ENCODE measurements at regions of chr16 and their contacts with region 1.

Region 1: GRCh38 chr16:57084257-57084770 is 8.1 kb upstream of the CPNE2 start:
- DNase-seq: peak; percentile 81 to 93
- ATAC-seq: peak; percentile 67 to 87
- H3K4me3 ChIP-seq: no peak overlapping the region
- H3K27ac ChIP-seq: peak overlapping the region in 1 of 2 experiments; percentile 56; a peak in 3 of 6 replicates
- H3K4me1 ChIP-seq: no peaks in the 10 kb centered on the region
- CTCF ChIP-seq: peak; percentile 90
- EP300 ChIP-seq: no peak
- POLR2A ChIP-seq: no peak
- RAD21 ChIP-seq: peak; percentile 86 to 90

Region 2: DNA sequence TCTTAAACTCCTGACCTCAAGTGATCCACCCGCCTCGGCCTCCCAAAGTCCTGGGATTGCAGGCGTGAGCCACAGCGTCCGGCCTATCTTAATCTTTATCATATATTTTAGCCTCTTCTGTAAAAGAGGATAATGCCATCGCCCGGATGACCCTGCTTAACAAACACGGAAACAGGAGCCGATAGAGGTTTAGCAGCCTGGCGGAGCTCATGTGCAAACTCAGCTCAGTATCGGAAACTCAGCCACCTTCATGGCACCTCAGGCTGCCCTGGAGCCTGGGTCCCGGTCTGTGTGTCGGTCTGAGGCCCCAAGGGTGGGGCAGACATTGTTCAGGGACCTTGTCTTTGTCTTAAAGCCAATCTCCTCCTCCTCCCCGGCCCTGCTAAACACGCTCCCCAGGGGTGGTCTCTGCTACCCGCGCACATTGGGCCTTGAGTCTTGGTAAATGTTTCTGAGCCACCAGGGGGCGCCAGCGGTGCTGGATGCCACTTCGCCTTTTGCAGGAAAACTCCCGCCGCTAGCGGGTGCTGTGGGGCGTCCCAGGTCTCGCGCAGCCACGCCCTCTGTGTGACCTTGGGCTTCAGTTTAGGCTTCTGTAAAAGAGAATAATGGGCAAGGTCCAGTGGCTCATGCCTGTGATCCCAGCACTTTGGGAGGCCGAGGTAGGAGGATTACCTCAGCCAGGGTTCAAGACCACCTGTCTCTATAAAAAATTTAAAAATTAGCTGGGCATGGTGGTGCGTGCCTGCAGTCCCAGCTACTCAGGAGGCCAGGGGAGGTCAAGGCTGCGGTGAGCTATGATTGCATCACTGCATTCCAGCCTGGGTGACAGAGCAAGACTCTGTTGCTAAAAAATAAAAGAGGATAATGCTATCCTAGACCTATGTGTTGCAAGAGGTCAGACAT is 119.8 kb before region 1 on chr16:
- CTCF ChIA-PET with region 1: interaction called, 11 read pairs
- POLR2A ChIA-PET with region 1: no interaction called
- DNase-seq: peak; percentile 73 to 85
- ATAC-seq: peak; percentile 57 to 87; a peak in 4 of 6 replicates
- H3K4me3 ChIP-seq: no peak overlapping the region
- H3K27ac ChIP-seq: peak overlapping the region in 1 of 2 experiments; percentile 22; a peak in 1 of 6 replicates
- H3K4me1 ChIP-seq: peaks cover 3% of the 10 kb centered on the region; the same call in 1 of the 3 replicates
- CTCF ChIP-seq: peak; percentile 89
- EP300 ChIP-seq: no peak
- POLR2A ChIP-seq: no peak
- RAD21 ChIP-seq: peak; percentile 70 to 82

Region 3: GRCh38 chr16:57066625-57067024 is 17.7 kb before region 1 on chr16:
- CTCF ChIA-PET with region 1: interaction called, 31 read pairs
- POLR2A ChIA-PET with region 1: no interaction called
- DNase-seq: no peak
- ATAC-seq: no peak
- H3K4me3 ChIP-seq: no peak overlapping the region
- H3K27ac ChIP-seq: no peak overlapping the region
- H3K4me1 ChIP-seq: peaks cover 6% of the 10 kb centered on the region
- CTCF ChIP-seq: no peak
- EP300 ChIP-seq: no peak
- POLR2A ChIP-seq: no peak
- RAD21 ChIP-seq: no peak

Region 4: DNA sequence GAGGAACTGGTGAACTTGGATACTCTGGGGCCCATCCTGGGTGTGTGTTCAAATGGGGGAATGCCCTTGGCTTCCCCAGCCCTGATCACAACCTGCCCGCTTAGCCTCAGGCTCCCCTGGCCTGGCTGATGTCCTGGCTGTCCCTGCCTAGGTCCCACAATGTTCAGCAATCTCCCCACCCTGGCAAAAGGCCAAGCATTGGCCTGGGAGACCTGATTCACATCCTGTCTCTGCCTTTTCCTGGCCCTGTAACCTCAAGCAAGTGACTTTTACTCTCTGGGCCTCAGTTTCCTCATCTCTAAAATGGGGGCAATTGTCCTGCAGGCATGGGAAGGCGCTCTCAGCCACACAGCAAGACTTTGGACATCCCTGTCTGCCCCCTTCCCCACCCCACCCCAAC is 22.5 kb after region 1 on chr16:
- CTCF ChIA-PET with region 1: interaction called, 26 read pairs
- POLR2A ChIA-PET with region 1: no interaction called
- DNase-seq: no peak
- ATAC-seq: peak; percentile 15 to 24; a peak in 2 of 6 replicates
- H3K4me3 ChIP-seq: no peak overlapping the region
- H3K27ac ChIP-seq: peak overlapping the region in 1 of 2 experiments; percentile 58; a peak in 2 of 6 replicates
- H3K4me1 ChIP-seq: peaks cover 28% of the 10 kb centered on the region
- CTCF ChIP-seq: no peak
- EP300 ChIP-seq: no peak
- POLR2A ChIP-seq: no peak
- RAD21 ChIP-seq: no peak

Region 5: GRCh38 chr16:57167953-57168352 is 83.6 kb after region 1 on chr16:
- CTCF ChIA-PET with region 1: interaction called, 13 read pairs
- POLR2A ChIA-PET with region 1: no interaction called
- DNase-seq: peak in 1 of 2 experiments; percentile 73
- ATAC-seq: peak; percentile 80 to 84
- H3K4me3 ChIP-seq: no peak overlapping the region
- H3K27ac ChIP-seq: no peak overlapping the region
- H3K4me1 ChIP-seq: no peaks in the 10 kb centered on the region
- CTCF ChIP-seq: peak; percentile 71
- EP300 ChIP-seq: no peak
- POLR2A ChIP-seq: no peak
- RAD21 ChIP-seq: peak; percentile 67 to 79